ENCODE measurements at regions of chr3 and their contacts with region 1.

Region 1: GRCh38 chr3:48240711-48241491 is at the start of gene ZNF589:
- DNase-seq: peak; percentile 85 to 92 (median 87)
- H3K4me3 ChIP-seq: peak within 1 kb of the TSS; percentile 81 to 95 (median 91)
- H3K4me3 Mint-ChIP-seq: peak within 1 kb of the TSS; percentile 87 to 96
- H3K27ac ChIP-seq: peak within 1 kb of the TSS; percentile 65 to 83
- H3K27ac Mint-ChIP-seq: peak within 1 kb of the TSS; percentile 81 to 92 (median 89)
- H3K4me1 ChIP-seq: peaks cover 59 to 61% of the 10 kb centered on the region in 2 donors
- H3K4me1 Mint-ChIP-seq: peaks cover 43% of the 10 kb centered on the region
- H3K27me3 ChIP-seq: no peaks in the 10 kb centered on the region
- H3K27me3 Mint-ChIP-seq: peaks cover 0 to 3% (median 0%) of the 10 kb centered on the region in 3 donors
- CTCF ChIP-seq: peak; percentile 18
- polyA plus RNA-seq, gene ZNF589: 1.6 to 42.6 (median 1.6) TPM

Region 2: GRCh38 chr3:48088056-48088748 is 152.7 kb before region 1 on chr3:
- intact Hi-C with region 1: no loop called
- DNase-seq: peak in 2 of 3 donors; percentile 2 to 6
- H3K4me3 ChIP-seq: peak overlapping the region; percentile 70 to 96 (median 86)
- H3K4me3 Mint-ChIP-seq: peak overlapping the region; percentile 95 to 98
- H3K27ac ChIP-seq: peak overlapping the region in 1 of 2 donors; percentile 76
- H3K27ac Mint-ChIP-seq: peak overlapping the region; percentile 53 to 92 (median 79)
- H3K4me1 ChIP-seq: peaks cover 18 to 29% of the 10 kb centered on the region in 2 donors
- H3K4me1 Mint-ChIP-seq: peaks cover 22% of the 10 kb centered on the region
- H3K27me3 ChIP-seq: no peaks in the 10 kb centered on the region
- H3K27me3 Mint-ChIP-seq: peaks cover 0 to 2% (median 0%) of the 10 kb centered on the region in 3 donors
- CTCF ChIP-seq: no peak

Region 3: GRCh38 chr3:48188266-48189201 is 52.4 kb before region 1 on chr3 and contains the start of gene CDC25A:
- intact Hi-C with region 1: loop called in 1 of 2 experiments (anchors 5 kb)
- DNase-seq: peak; percentile 95 to 96 (median 95)
- H3K4me3 ChIP-seq: peak within 1 kb of the TSS; percentile 76 to 91 (median 79)
- H3K4me3 Mint-ChIP-seq: peak within 1 kb of the TSS; percentile 88
- H3K27ac ChIP-seq: peak within 1 kb of the TSS in 1 of 2 donors; percentile 34
- H3K27ac Mint-ChIP-seq: peak within 1 kb of the TSS in 5 of 7 donors; percentile 26 to 77 (median 48)
- H3K4me1 ChIP-seq: peaks cover 16 to 21% of the 10 kb centered on the region in 2 donors
- H3K4me1 Mint-ChIP-seq: peaks cover 15% of the 10 kb centered on the region
- H3K27me3 ChIP-seq: no peaks in the 10 kb centered on the region
- H3K27me3 Mint-ChIP-seq: peaks cover 0 to 2% (median 2%) of the 10 kb centered on the region in 3 donors
- CTCF ChIP-seq: no peak
- polyA plus RNA-seq, gene CDC25A: 0.07 to 0.39 TPM in 2 of 3 donors, not detected in the other

Region 4: DNA sequence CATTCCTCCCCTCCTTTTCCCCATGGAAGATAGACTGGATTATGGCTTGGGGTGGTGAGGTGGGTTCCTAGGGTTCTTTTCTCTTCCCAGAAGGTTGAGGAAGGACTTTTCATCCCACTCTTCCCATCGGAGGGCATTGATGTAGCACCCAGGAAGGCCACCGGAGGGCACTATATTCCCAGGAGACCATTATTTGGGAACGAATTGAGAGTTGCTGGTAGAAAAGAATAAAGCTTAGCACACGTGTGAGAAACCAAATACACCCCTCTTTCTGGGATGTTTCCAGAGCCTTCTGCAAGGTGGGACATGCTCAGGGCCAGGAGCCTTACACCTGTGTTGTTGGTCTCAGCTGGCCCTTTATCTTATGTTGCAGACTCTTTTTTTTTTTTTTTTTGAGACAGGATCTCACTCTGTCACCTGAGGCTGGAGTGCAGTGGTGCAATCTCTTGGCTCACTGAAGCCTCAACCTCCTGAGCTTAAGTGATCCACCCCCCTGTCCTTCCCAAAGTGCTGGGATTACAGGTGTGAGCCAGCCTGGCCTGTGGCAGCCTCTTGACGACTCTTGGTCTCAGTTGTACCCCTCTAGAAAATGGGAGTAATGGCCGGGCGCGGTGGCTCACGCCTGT is 46.3 kb before region 1 on chr3:
- intact Hi-C with region 1: loop called (anchors 5 kb)
- DNase-seq: peak; percentile 21 to 61 (median 50)
- H3K4me3 ChIP-seq: no peak overlapping the region
- H3K4me3 Mint-ChIP-seq: no peak overlapping the region
- H3K27ac ChIP-seq: no peak overlapping the region
- H3K27ac Mint-ChIP-seq: no peak overlapping the region
- H3K4me1 ChIP-seq: peaks cover 18 to 21% of the 10 kb centered on the region in 2 donors
- H3K4me1 Mint-ChIP-seq: peaks cover 21% of the 10 kb centered on the region
- H3K27me3 ChIP-seq: no peaks in the 10 kb centered on the region
- H3K27me3 Mint-ChIP-seq: peaks cover 2 to 7% (median 6%) of the 10 kb centered on the region in 3 donors
- CTCF ChIP-seq: peak; percentile 86

Region 5: DNA sequence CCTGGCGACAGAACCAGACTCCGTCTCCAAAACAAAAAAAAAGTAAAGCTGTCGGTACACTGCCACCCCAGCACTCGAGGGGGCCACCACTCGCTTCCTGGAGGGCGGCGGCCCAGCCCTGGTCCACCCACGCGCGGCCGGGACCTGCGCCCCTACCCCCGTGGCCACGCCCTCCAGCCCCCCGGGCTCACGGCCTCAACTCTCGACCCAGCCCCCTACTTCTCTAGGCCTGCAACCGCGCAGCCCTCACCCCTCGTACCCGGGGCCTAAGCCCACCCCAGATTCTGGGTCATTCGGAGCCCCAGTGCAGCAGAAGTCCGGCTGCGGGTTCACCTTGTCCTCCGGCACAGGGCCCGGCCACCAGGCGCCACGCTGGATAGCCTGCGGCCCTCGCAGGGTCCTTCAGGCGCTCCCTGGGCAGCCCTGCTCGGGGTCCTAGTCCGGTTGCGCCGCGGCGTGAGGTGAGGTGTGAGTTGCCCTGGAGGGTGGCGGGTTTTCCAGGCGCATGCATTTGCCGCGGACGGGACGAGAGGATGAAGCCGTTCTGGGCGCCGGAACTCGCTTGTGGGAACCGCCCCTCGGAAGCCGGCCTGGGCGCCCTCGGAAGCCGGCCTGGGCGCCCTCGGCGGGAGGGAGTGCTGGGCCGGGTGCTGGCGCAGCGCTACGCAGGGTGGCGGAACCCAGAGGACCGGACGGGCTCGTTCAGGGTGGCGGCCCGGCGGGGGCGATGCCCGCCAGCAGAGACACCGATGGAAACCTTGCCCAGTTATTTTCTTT is 60.3 kb after region 1 on chr3:
- intact Hi-C with region 1: no loop called
- DNase-seq: peak; percentile 83 to 84 (median 84)
- H3K4me3 ChIP-seq: peak within 1 kb of the TSS; percentile 71 to 92 (median 81)
- H3K4me3 Mint-ChIP-seq: peak within 1 kb of the TSS; percentile 96
- H3K27ac ChIP-seq: peak within 1 kb of the TSS; percentile 79 to 87
- H3K27ac Mint-ChIP-seq: peak within 1 kb of the TSS; percentile 91 to 96 (median 95)
- H3K4me1 ChIP-seq: peaks cover 19 to 25% of the 10 kb centered on the region in 2 donors
- H3K4me1 Mint-ChIP-seq: peaks cover 25% of the 10 kb centered on the region
- H3K27me3 ChIP-seq: no peaks in the 10 kb centered on the region
- H3K27me3 Mint-ChIP-seq: peaks cover 0 to 3% (median 0%) of the 10 kb centered on the region in 3 donors
- CTCF ChIP-seq: no peak

Region 6: DNA sequence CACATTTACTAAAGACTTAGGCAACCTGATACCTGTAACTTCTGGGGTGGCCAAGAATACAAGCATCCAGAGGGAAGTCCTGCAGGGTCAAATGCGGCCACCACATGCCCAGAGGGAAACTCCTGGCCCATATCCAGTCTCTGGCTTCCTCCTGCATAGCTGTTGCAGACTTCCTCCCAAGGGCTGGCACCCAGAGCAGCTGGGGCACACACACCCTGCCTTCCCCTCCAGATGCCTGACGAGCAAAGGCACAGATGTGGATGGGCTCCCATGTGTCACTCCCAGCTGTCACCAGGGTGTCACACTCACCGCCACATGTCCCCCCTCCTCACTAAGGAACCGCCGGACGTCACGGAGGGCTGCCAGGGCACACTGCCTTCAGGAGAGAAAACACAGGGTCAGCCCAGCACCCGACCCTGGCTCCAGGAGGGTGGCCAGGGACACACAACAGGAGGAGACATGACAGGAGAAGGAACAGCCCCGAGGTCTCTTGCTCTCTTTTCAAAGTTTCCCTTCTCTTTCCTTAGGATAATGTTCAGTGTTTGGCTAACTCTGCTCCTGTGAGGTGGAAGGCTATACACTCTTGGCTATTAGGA is 302.5 kb after region 1 on chr3:
- intact Hi-C with region 1: no loop called
- DNase-seq: peak; percentile 64 to 86 (median 65)
- H3K4me3 ChIP-seq: peak overlapping the region in 1 of 3 experiments; percentile 60
- H3K4me3 Mint-ChIP-seq: peak overlapping the region; percentile 62 to 83
- H3K27ac ChIP-seq: peak overlapping the region; percentile 44 to 87
- H3K27ac Mint-ChIP-seq: peak overlapping the region; percentile 86 to 93 (median 91)
- H3K4me1 ChIP-seq: peaks cover 26 to 45% of the 10 kb centered on the region in 2 donors
- H3K4me1 Mint-ChIP-seq: peaks cover 47% of the 10 kb centered on the region
- H3K27me3 ChIP-seq: no peaks in the 10 kb centered on the region
- H3K27me3 Mint-ChIP-seq: peaks cover 0 to 1% (median 0%) of the 10 kb centered on the region in 3 donors
- CTCF ChIP-seq: no peak